HEK293T (cell line): ENCODE measurements at regions of chr4 and their contacts with region 1.

Region 1: GRCh38 chr4:145097821-145098674 is at the starts of genes ABCE1 and ANAPC10:
- DNase-seq: peak; percentile 94

Region 2: GRCh38 chr4:145066063-145066501 is 32.0 kb before region 1 on chr4:
- CTCF ChIA-PET with region 1: no interaction called
- POLR2A ChIA-PET with region 1: interaction called, 13 read pairs
- DNase-seq: peak; percentile 32

Region 3: DNA sequence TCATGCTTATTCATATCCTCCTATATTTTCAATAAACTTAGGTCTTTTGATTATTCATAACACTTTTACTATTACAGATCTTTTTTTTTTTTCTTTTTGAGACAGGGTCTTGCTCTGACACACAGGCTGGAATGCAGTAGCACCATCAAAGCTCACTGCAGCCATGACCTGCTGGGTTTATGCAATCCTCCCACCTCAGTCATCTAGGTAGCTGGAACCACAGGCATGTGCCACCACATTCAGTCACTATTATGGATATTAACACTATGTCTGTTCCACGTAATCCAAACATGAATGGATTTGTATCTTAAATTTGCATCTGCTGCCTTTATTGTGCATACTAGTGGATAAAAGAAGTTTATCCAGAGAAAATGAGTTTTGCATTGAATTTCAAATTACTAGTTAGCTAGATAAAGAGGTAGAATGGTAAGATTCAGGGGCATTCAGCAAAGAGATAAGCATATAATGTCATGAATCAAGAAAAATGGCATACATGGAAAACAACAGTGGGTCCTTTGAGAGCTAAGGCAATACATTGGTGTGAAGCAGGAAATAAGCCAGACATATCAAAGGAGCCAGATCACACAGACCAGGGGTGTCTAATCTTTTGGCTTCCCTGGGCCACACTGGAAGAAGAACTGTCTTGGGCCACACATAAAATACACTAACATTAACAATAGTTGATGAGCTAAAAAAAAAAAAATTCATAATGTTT is 14.0 kb before region 1 on chr4:
- CTCF ChIA-PET with region 1: no interaction called
- POLR2A ChIA-PET with region 1: interaction called, 20 read pairs
- DNase-seq: no peak

Region 4: GRCh38 chr4:145219090-145219489 is 121.0 kb after region 1 on chr4:
- CTCF ChIA-PET with region 1: no interaction called
- POLR2A ChIA-PET with region 1: no interaction called
- DNase-seq: no peak

Region 5: DNA sequence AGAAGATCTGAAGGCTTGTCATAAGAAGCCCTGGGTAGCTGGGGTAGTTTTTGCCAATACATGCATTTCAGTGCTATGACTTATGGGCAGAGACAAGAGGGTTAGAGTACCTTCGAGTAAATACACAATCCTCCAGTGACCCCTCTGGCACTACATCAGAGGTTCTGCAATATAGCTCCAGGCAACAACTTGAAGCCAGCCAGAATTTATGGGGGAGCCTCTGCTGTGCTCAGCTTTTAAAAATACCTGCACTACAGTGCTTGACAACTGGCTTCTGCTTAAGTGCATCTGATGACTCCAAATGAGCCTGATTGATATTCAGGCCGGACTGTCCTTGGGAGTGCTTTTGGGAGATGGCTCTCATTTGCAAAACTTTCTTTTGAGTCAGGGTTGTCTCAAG is 338.7 kb after region 1 on chr4:
- CTCF ChIA-PET with region 1: no interaction called
- POLR2A ChIA-PET with region 1: no interaction called
- DNase-seq: no peak